ENCODE measurements at regions of chr20 and their contacts with region 1.

Region 1: DNA sequence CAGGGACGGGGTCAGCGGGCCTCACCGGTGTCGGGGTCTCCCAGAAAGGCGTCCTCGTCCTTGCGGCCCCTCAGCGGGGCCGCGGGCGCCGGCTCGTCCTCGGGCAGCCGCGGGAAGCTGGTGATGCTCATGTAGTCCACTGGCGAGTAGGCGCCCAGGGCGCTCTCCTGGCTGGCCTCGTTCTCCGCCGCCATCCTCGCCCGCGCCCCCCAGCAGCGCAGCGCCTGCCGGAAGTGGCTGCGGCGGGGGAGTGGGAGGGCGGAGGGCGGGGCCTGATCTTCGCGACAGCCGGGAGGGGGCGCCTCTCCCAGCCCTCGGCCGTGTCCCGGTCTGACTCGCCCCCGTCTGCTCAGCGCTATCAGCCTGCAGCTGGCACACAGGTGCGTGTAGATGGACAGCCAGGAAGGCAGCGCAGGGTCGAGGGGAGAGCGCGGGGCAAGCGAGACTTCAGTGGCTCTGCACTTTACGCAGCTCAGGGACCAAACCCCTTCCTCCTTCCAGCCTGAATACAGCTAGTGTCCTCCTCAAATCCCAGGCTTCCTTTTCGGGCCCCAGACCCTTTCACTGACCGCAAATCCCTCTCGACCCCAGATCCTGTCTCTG is at the start of gene GGT7:
- DNase-seq: peak; percentile 71 to 86 (median 79)
- H3K4me3 ChIP-seq: peak within 1 kb of the TSS in 2 of 4 donors; percentile 46 to 93
- H3K27ac ChIP-seq: peak within 1 kb of the TSS in 2 of 5 donors; percentile 15 to 63
- H3K4me1 ChIP-seq: peaks cover 16 to 36% of the 10 kb centered on the region in 2 donors
- H3K27me3 ChIP-seq: no peaks in the 10 kb centered on the region
- CTCF ChIP-seq: peak; percentile 31 to 68 (median 54)
- POLR2A ChIP-seq: peak in 1 of 2 donors; percentile 16
- total RNA-seq, gene GGT7: 6.5 to 24.8 (median 15.1) TPM

Region 2: GRCh38 chr20:34954905-34955231 is 82.1 kb after region 1 on chr20:
- intact Hi-C with region 1: loop called (anchors 5 kb)
- DNase-seq: peak in 6 of 7 donors; percentile 41 to 68 (median 52)
- H3K4me3 ChIP-seq: peak overlapping the region in 3 of 4 donors; percentile 0 to 55 (median 42)
- H3K27ac ChIP-seq: peak overlapping the region in 4 of 5 donors; percentile 76 to 94 (median 86)
- H3K4me1 ChIP-seq: peaks cover 0 to 10% of the 10 kb centered on the region in 2 donors
- H3K27me3 ChIP-seq: no peaks in the 10 kb centered on the region
- CTCF ChIP-seq: no peak
- POLR2A ChIP-seq: no peak

Region 3: GRCh38 chr20:34964486-34964885 is 91.8 kb after region 1 on chr20:
- intact Hi-C with region 1: loop called in 1 of 2 experiments (anchors 5 kb)
- DNase-seq: no peak
- H3K4me3 ChIP-seq: no peak overlapping the region
- H3K27ac ChIP-seq: no peak overlapping the region
- H3K4me1 ChIP-seq: no peaks in the 10 kb centered on the region
- H3K27me3 ChIP-seq: no peaks in the 10 kb centered on the region
- CTCF ChIP-seq: no peak
- POLR2A ChIP-seq: no peak

Region 4: DNA sequence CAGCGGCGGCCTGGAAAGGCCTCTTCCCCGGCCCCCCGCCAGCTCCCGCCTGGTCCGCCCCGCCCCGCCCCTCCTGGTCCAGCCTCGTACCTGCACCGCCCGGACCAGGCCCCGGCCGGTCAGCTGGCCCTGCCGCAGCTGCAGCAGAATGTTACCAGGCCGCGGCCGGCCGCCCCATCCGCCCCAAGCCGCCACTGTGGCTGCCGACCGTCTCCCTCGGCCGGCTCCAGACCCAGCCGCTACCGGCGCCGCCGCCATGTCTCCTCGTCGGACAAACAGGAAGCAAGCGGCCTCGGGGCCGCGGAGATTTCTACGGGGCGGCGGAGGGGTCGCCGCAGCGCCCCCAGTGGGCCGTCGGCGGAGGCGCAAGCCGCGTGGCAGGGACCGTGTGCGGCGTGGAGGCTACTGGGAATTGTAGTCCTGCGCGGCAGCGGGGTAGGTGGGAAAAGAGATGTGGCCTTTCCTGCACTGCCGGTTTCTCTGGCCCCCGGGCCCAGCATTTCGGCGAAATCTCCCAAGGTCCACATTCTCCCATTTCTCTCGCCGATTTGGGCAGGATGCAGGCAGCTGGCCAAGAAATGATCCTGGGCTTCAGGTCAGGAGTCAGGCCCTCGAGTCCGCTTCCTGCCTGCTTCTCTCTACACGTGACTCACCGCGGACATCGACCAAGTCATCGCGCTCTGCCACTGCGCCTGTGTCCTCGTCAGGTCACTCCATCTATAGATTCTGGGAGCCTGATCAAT is 220.0 kb after region 1 on chr20 and contains the start of gene TRPC4AP:
- intact Hi-C with region 1: loop called in 1 of 2 experiments (anchors 5 kb)
- DNase-seq: peak; percentile 85 to 94 (median 89)
- H3K4me3 ChIP-seq: peak within 1 kb of the TSS; percentile 28 to 97 (median 86)
- H3K27ac ChIP-seq: peak within 1 kb of the TSS; percentile 74 to 95 (median 93)
- H3K4me1 ChIP-seq: peaks cover 26 to 46% of the 10 kb centered on the region in 2 donors
- H3K27me3 ChIP-seq: no peaks in the 10 kb centered on the region
- CTCF ChIP-seq: peak; percentile 82 to 99 (median 92)
- POLR2A ChIP-seq: peak; percentile 66 to 80
- total RNA-seq, gene TRPC4AP: 33.8 to 87.2 (median 80.5) TPM

Measured in adrenal gland (tissue), 19 donors.